Ascending aorta (tissue), 2 donors: ENCODE measurements at regions of chr11 and their contacts with region 1.

Region 1: DNA sequence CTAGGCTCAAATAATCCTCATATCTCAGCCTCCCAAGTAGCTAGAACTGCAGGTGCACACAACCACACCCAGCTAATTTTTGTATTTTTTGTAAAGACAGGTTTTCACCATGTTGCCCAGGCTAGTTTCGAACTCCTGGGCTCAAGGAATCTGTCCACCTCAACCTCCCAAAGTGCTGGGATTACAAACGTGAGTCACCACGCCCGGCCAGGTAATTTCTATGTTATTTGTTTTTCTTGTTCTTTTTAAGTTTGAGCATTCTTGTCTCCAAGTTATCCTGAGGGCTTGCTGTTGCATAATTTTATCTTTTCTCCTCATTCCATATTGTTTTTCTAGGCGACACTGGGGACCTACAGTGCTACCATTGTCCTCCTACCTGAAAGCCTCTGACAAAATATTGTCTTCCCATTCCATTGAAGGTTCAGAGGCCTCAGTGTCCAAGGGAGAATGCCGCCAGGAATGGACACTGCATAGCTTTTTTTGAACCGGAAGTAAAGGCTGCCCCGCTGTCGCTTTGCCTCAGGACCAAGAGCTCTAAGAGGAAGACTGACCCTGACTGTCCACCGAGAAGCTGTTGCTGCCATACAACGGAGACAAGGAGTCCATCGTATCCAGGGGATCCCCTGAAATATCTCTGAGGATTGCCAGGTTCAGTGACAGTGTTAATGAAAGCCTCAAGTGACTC is 9.8 kb downstream of the AP5B1 start:
- DNase-seq: no peak
- H3K4me3 ChIP-seq: no peak overlapping the region
- H3K27ac ChIP-seq: no peak overlapping the region
- H3K4me1 ChIP-seq: no peaks in the 10 kb centered on the region
- H3K27me3 ChIP-seq: no peaks in the 10 kb centered on the region
- CTCF ChIP-seq: no peak

Region 2: DNA sequence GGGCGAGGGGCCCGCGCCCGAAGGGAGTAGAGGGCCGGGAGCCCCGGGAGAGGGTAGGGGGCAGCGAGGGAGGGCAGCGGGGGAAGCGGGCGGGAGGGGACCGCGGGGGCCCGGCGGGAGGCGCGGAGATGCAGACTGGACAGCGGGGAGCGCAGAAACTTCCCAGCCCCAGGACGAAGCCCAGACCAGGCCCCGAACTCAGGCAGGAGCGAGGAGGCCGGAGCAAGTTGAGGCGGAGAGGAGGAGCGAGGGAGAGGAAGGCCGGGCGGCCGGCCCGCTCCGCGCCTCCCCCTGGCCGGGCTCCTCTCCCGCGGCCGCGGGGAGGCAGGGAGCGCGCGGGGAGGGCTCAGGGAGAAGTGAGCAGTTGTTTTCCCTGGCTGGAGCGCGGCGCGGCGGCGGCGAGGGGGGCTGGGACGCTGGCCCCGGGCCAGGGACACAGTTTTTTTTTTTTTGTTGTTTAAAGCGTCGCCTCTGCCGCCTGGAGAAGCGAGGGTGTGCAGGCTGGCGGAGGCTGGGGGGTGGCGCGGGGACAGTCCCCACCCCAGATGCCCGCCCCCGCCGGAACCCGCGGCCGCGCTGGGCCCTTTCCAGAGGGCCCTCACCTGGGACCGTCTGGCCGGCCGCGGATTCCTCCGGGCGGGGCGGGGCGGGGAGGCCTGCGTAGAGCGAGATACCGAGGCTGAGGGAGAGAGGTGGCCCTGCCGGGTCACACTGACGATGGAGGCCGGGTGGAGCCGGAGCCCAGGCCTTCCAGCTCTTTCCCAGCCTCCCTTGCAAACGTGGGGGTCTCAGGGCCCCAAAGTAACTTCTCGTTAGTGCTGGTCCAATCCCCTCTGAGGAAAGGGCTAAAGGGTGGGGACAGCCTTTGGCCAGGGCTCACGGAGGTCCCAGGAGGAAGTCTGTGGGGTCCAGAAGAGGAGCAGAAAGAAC is 212.7 kb before region 1 on chr11 and contains the start of gene LTBP3:
- intact Hi-C with region 1: no loop called
- DNase-seq: peak in 1 of 2 donors; percentile 93
- H3K4me3 ChIP-seq: peak within 1 kb of the TSS; percentile 79 to 82
- H3K27ac ChIP-seq: peak within 1 kb of the TSS; percentile 97 to 99
- H3K4me1 ChIP-seq: peaks cover 26 to 69% of the 10 kb centered on the region in 2 donors
- H3K27me3 ChIP-seq: no peaks in the 10 kb centered on the region
- CTCF ChIP-seq: no peak
- total RNA-seq, gene LTBP3: 702 TPM

Region 3: DNA sequence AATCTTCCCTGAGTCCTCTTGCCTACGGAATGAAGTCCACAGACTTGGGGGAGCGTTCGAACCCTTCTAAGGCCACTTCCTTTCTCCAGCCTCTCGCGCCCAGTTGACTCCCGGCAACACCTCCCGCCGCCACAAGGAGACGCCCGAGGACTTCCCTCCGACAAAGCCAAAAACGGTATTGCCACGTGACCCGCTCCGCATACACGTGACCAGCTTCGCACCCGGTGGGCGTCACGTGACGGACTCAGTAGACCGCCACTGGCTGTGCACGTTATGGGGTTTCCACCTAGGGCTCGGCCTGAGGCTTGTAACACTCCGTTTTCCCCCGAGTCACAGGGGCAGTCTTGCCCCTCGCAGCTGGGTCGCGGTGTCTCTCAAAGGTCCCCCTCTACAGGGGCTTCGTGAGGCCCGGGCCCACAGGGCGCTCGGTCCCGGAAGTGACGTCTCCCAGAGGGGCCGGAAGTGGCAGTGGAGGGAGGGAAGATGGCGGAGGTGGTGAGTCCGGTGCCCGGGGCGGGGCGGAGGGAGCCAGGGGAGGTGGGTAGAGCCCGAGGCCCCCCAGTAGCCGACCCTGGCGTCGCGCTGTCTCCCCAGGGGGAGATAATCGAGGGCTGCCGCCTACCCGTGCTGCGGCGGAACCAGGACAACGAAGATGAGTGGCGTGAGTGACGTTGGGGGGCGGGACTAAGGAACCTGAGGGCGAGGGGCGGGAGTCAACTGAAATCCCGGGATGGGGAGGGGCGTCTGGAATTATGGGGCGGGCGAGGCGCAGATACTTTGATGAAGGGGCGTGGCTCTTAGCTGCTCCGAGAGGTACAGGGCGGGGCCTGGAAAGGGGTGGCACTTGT is 59.0 kb before region 1 on chr11 and contains the start of gene KAT5:
- intact Hi-C with region 1: loop called (anchors 2 kb)
- DNase-seq: peak; percentile 96 to 99
- H3K4me3 ChIP-seq: peak within 1 kb of the TSS; percentile 72 to 94
- H3K27ac ChIP-seq: peak within 1 kb of the TSS; percentile 96 to 100
- H3K4me1 ChIP-seq: peaks cover 4 to 19% of the 10 kb centered on the region in 2 donors
- H3K27me3 ChIP-seq: no peaks in the 10 kb centered on the region
- CTCF ChIP-seq: peak; percentile 95 to 99 (median 98)
- total RNA-seq, gene KAT5: 31.0 TPM